AG04450 (cell line): ENCODE measurements at regions of chr3 and their contacts with region 1.

Region 1: GRCh38 chr3:159988617-159989271 is at the start of gene IL12A:
- DNase-seq: no peak
- H3K4me3 ChIP-seq: peak within 1 kb of the TSS; percentile 70
- H3K27ac ChIP-seq: no peak within 1 kb of the TSS
- H3K27me3 ChIP-seq: no peaks in the 10 kb centered on the region
- CTCF ChIP-seq: peak; percentile 92
- polyA plus RNA-seq, gene IL12A: 2.3 and 3.6 TPM in 2 replicates

Region 2: GRCh38 chr3:159872374-159873109 is 116.2 kb before region 1 on chr3:
- CTCF ChIA-PET with region 1: interaction called, 12 read pairs
- POLR2A ChIA-PET with region 1: no interaction called
- DNase-seq: peak; percentile 74
- H3K4me3 ChIP-seq: no peak overlapping the region
- H3K27ac ChIP-seq: peak overlapping the region; percentile 71
- H3K27me3 ChIP-seq: no peaks in the 10 kb centered on the region
- CTCF ChIP-seq: peak; percentile 44

Region 3: DNA sequence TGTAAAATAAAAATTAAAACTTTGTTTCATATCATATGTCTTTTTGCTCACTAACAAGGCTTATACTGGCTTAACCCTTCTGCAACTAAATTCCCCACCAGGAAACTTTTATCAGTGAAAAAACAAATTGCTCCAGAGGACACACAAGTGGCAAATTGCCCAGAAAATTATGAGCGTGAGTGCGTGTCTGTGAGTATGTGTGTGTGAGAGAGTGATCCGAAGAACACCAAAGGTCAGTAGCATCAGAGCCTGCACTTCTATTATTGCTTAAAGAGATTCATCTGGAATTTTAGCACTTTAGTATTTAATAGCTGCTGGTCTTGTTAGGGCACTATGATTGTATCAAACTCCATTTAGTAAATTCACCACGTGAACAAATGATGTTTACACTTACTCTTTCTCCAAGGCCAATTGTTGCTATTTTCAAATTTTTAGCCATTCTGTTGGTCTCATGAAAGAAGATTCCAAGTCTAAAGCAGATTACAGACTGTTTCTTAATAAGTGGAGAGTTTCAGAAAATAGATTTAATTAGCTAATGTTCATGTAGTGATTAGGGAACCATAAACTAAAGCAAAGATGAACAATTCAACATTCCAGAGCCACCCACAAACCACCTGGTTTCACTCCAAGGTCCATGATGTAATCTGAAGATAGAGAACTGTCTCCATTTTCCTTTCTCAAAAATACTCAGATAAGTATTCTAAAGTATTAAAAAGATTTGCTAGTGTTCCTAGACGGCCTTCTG is 91.2 kb before region 1 on chr3:
- CTCF ChIA-PET with region 1: interaction called, 16 read pairs
- POLR2A ChIA-PET with region 1: interaction called, 4 read pairs
- DNase-seq: no peak
- H3K4me3 ChIP-seq: no peak overlapping the region
- H3K27ac ChIP-seq: no peak overlapping the region
- H3K27me3 ChIP-seq: no peaks in the 10 kb centered on the region
- CTCF ChIP-seq: no peak

Region 4: GRCh38 chr3:159929435-159930141 is 59.2 kb before region 1 on chr3:
- CTCF ChIA-PET with region 1: interaction called, 19 read pairs
- POLR2A ChIA-PET with region 1: interaction called, 7 read pairs
- DNase-seq: peak; percentile 58
- H3K4me3 ChIP-seq: no peak overlapping the region
- H3K27ac ChIP-seq: peak overlapping the region; percentile 92
- H3K27me3 ChIP-seq: no peaks in the 10 kb centered on the region
- CTCF ChIP-seq: peak; percentile 69

Region 5: DNA sequence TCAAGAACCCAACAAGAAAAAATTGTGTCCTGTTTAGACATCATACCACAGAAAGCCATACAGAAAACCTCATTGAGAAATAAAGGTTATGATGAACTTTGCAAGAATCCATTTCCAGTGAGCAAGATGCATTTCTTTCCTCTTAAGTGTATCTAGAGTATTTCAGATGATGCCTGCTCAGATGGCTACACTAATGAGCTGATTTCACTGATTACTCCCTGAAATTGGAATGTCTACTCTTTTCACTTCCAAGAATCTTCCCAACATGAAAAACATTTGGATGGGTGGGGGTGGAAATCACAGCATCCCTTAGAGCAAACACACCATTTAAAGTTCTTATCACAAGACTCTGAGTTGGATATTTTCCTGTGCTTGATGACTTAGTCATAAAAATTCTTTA is 41.5 kb before region 1 on chr3:
- CTCF ChIA-PET with region 1: interaction called, 16 read pairs
- POLR2A ChIA-PET with region 1: no interaction called
- DNase-seq: peak; percentile 61
- H3K4me3 ChIP-seq: no peak overlapping the region
- H3K27ac ChIP-seq: no peak overlapping the region
- H3K27me3 ChIP-seq: no peaks in the 10 kb centered on the region
- CTCF ChIP-seq: no peak

Region 6: GRCh38 chr3:159964166-159964973 is 24.4 kb before region 1 on chr3:
- CTCF ChIA-PET with region 1: interaction called, 33 read pairs
- POLR2A ChIA-PET with region 1: no interaction called
- DNase-seq: peak; percentile 49
- H3K4me3 ChIP-seq: no peak overlapping the region
- H3K27ac ChIP-seq: peak overlapping the region; percentile 75
- H3K27me3 ChIP-seq: no peaks in the 10 kb centered on the region
- CTCF ChIP-seq: no peak

Region 7: GRCh38 chr3:159978353-159978752 is 10.4 kb before region 1 on chr3:
- CTCF ChIA-PET with region 1: interaction called, 91 read pairs
- POLR2A ChIA-PET with region 1: no interaction called
- DNase-seq: no peak
- H3K4me3 ChIP-seq: no peak overlapping the region
- H3K27ac ChIP-seq: no peak overlapping the region
- H3K27me3 ChIP-seq: no peaks in the 10 kb centered on the region
- CTCF ChIP-seq: no peak

Region 8: GRCh38 chr3:160253298-160253697 is 264.6 kb after region 1 on chr3:
- CTCF ChIA-PET with region 1: no interaction called
- POLR2A ChIA-PET with region 1: no interaction called
- DNase-seq: no peak
- H3K4me3 ChIP-seq: no peak overlapping the region
- H3K27ac ChIP-seq: no peak overlapping the region
- H3K27me3 ChIP-seq: no peaks in the 10 kb centered on the region
- CTCF ChIP-seq: no peak